ENCODE measurements at regions of chr4 and their contacts with region 1.

Region 1: DNA sequence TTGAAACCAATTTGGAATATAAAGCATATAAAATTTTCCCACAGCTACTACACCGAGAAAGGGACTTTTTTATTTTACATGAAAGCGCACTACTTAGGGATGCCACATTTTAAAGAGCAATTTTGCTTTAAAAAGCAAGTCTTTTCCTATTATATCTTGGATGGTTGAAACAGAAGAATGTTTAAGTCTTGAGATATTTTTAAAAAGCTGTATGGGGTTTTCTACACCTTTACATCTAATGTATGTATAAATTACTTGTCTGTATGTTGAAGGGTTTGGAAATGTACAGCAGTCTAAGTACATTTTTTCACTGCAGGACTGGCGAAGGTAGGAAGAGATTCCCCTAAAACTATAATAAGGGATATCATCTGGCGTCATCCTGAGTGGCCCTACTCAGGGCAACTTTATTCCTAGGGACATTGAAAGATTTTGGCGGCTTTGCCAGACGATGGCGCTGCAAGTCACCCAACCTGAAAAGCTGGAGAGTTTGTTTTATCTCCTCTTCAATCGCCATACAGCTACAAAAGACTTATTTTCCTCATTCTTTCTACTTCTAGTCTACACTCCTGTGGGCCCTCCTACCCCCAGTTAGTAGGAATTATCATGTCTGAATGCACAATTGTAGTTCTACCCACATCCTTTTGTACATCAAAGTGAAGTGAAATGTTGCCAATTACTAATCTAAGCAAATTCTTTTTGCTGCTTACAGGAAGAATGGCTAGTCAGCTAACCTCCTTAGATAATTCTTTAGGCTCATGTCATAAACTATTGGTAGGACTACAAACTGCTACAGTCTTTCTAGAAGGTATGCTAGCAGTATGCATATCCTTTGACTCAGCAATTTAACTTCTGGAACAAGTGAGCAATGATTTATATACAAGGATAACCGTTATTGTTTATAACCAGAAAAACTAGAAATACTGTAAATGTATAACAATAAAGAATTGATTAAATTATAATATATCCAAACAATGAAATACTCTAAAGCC is 782 bp upstream of the NEK1 start:
- DNase-seq: peak; percentile 53 to 72
- ATAC-seq: peak; percentile 77 to 82
- H3K4me3 ChIP-seq: peak overlapping the region; percentile 61 to 92 (median 92)
- H3K27ac ChIP-seq: peak overlapping the region; percentile 93 to 99 (median 96)
- H3K4me1 ChIP-seq: peaks cover 13 to 15% of the 10 kb centered on the region in 2 donors
- H3K27me3 ChIP-seq: no peaks in the 10 kb centered on the region
- CTCF ChIP-seq: peak; percentile 41 to 69 (median 53)
- POLR2A ChIP-seq: no peak

Region 2: DNA sequence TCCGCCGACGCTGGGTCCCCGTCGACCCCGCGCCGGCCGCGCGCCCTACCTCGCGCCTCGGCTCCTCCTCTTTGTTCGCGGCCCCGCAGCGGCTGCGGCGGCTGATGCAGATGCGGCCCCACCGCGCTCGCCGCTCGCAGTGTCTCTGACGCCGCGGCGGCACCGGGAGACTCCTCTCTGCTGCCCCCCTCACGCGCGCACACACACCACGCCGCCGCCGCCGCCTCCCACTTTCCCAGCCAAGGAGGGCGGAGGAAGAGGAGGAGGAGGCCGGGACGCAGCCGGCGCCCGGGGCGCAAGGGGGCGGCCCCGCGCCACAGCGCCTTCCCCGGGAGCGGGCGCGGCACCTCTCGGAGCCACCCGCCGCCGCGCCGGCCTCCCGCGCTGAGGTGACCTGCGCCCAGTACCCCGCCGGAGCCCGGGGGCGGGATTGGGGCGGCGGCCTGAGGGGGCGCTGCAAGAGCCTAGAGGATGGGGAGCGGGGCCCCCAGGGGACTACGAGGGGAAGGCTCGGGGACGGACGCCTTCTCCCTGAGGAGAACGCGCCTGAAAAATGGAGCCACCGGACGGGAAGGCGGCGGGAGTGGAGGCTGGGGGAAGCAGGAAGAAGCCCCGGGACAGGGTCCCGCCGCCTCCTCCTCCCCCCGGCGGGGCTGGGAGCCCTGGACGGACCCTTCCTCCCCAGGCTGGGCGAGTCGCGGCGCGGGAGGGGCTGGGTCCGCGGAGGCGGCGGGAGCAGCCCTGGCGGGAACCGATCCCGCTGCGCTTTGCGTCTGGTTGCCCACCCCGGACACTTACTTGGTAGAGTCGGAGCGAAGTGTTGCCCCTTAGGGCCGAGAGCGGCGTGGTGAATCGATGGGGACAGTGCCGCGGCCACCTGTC is 342.1 kb before region 1 on chr4 and contains the start of gene SH3RF1:
- in situ Hi-C with region 1: no loop called
- intact Hi-C with region 1: loop called (anchors 2 kb)
- DNase-seq: peak; percentile 81 to 83
- ATAC-seq: peak; percentile 85 to 88
- H3K4me3 ChIP-seq: peak within 1 kb of the TSS; percentile 73 to 95 (median 92)
- H3K27ac ChIP-seq: peak within 1 kb of the TSS; percentile 87 to 95 (median 94)
- H3K4me1 ChIP-seq: peaks cover 22 to 24% of the 10 kb centered on the region in 2 donors
- H3K27me3 ChIP-seq: no peaks in the 10 kb centered on the region
- CTCF ChIP-seq: peak in 3 of 5 experiments; percentile 35 to 52 (median 44)
- POLR2A ChIP-seq: peak; percentile 89 to 95
- total RNA-seq, gene SH3RF1: 12.6 to 27.0 (median 13.4) TPM

Region 3: GRCh38 chr4:169362607-169363006 is 250.6 kb before region 1 on chr4:
- in situ Hi-C with region 1: no loop called
- intact Hi-C with region 1: no loop called
- DNase-seq: no peak
- ATAC-seq: no peak
- H3K4me3 ChIP-seq: no peak overlapping the region
- H3K27ac ChIP-seq: no peak overlapping the region
- H3K4me1 ChIP-seq: peaks cover 0 to 4% of the 10 kb centered on the region in 2 donors
- H3K27me3 ChIP-seq: no peaks in the 10 kb centered on the region
- CTCF ChIP-seq: no peak
- POLR2A ChIP-seq: no peak

Region 4: GRCh38 chr4:169690787-169691186 is 77.6 kb after region 1 on chr4:
- in situ Hi-C with region 1: no loop called
- intact Hi-C with region 1: no loop called
- DNase-seq: no peak
- ATAC-seq: no peak
- H3K4me3 ChIP-seq: no peak overlapping the region
- H3K27ac ChIP-seq: no peak overlapping the region
- H3K4me1 ChIP-seq: no peaks in the 10 kb centered on the region
- H3K27me3 ChIP-seq: no peaks in the 10 kb centered on the region
- CTCF ChIP-seq: no peak
- POLR2A ChIP-seq: no peak

Region 5: GRCh38 chr4:169757575-169758184 is 144.5 kb after region 1 on chr4 and contains the start of gene HPF1:
- in situ Hi-C with region 1: no loop called
- intact Hi-C with region 1: loop called (anchors 2 kb)
- DNase-seq: peak; percentile 84 to 88
- ATAC-seq: peak; percentile 96 to 97
- H3K4me3 ChIP-seq: peak within 1 kb of the TSS; percentile 78 to 100 (median 88)
- H3K27ac ChIP-seq: peak within 1 kb of the TSS; percentile 63 to 81 (median 73)
- H3K4me1 ChIP-seq: peaks cover 16 to 17% of the 10 kb centered on the region in 2 donors
- H3K27me3 ChIP-seq: no peaks in the 10 kb centered on the region
- CTCF ChIP-seq: peak in 1 of 5 experiments; percentile 15
- POLR2A ChIP-seq: peak; percentile 35 to 54
- total RNA-seq, gene HPF1: 18.4 to 51.8 (median 28.4) TPM

Region 6: GRCh38 chr4:169854090-169854489 is 240.9 kb after region 1 on chr4:
- in situ Hi-C with region 1: no loop called
- intact Hi-C with region 1: no loop called
- DNase-seq: no peak
- ATAC-seq: no peak
- H3K4me3 ChIP-seq: no peak overlapping the region
- H3K27ac ChIP-seq: no peak overlapping the region
- H3K4me1 ChIP-seq: no peaks in the 10 kb centered on the region
- H3K27me3 ChIP-seq: no peaks in the 10 kb centered on the region
- CTCF ChIP-seq: no peak
- POLR2A ChIP-seq: no peak

Region 7: DNA sequence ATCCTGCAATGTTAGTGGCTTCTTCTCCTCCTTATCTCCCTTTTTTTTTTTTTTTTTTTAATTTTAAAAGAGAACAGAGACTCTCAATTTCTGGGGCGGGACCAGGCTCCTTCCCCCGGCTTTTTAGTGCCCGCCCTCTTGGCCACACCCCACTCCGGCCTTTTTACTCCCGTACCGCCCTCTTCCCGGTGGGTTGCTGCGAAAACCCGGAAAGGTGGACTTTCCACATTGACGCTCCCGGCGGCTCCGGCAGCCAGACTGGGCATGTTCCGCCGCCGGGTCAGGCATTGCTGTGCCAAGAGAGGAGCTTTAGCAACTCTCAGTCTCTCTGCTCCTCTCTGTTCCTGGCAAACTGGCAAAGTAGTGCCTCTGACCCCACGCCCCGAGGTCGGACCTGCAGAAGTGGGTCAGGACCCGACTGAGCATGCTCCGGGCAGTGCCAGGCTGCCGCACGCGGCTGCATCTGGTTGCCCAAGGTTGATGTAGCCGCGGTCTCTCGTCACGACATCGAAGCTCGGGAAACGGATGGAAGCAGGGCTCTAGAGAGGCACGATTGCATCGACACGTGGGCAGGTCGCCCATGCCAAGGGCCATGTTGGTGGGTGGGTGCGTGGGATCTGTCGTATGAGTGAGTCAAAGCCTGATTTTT is 414.1 kb after region 1 on chr4:
- in situ Hi-C with region 1: loop called in 3 of 4 experiments (anchors 25 kb)
- intact Hi-C with region 1: loop called (anchors 2 kb)
- DNase-seq: peak; percentile 88 to 90
- ATAC-seq: peak; percentile 88 to 90
- H3K4me3 ChIP-seq: peak overlapping the region; percentile 74 to 91 (median 88)
- H3K27ac ChIP-seq: peak overlapping the region; percentile 90 to 93 (median 92)
- H3K4me1 ChIP-seq: peaks cover 8 to 18% of the 10 kb centered on the region in 2 donors
- H3K27me3 ChIP-seq: no peaks in the 10 kb centered on the region
- CTCF ChIP-seq: peak in 2 of 5 experiments; percentile 18 to 21
- POLR2A ChIP-seq: no peak

Region 8: GRCh38 chr4:170089668-170090351 is 476.6 kb after region 1 on chr4 and contains the start of gene AADAT:
- in situ Hi-C with region 1: no loop called
- intact Hi-C with region 1: loop called (anchors 5 kb)
- DNase-seq: peak; percentile 32 to 61
- ATAC-seq: peak; percentile 86 to 90
- H3K4me3 ChIP-seq: peak within 1 kb of the TSS; percentile 46 to 66 (median 58)
- H3K27ac ChIP-seq: peak within 1 kb of the TSS in 3 of 4 donors; percentile 17 to 22 (median 17)
- H3K4me1 ChIP-seq: peaks cover 5 to 8% of the 10 kb centered on the region in 2 donors
- H3K27me3 ChIP-seq: no peaks in the 10 kb centered on the region
- CTCF ChIP-seq: peak; percentile 30 to 74 (median 66)
- POLR2A ChIP-seq: no peak
- total RNA-seq, gene AADAT: 0.33 to 1.4 (median 0.82) TPM

Measured in gastrocnemius medialis (tissue), 4 donors.